PC-9 (cell line): ENCODE measurements at regions of chr15 and their contacts with region 1.

Region 1: GRCh38 chr15:50813877-50814276 is 48.4 kb upstream of the SPPL2A start:
- DNase-seq: no peak
- H3K4me3 ChIP-seq: no peak overlapping the region
- H3K27ac ChIP-seq: no peak overlapping the region
- H3K4me1 ChIP-seq: peaks cover 15% of the 10 kb centered on the region
- H3K27me3 ChIP-seq: no peaks in the 10 kb centered on the region
- CTCF ChIP-seq: no peak

Region 2: DNA sequence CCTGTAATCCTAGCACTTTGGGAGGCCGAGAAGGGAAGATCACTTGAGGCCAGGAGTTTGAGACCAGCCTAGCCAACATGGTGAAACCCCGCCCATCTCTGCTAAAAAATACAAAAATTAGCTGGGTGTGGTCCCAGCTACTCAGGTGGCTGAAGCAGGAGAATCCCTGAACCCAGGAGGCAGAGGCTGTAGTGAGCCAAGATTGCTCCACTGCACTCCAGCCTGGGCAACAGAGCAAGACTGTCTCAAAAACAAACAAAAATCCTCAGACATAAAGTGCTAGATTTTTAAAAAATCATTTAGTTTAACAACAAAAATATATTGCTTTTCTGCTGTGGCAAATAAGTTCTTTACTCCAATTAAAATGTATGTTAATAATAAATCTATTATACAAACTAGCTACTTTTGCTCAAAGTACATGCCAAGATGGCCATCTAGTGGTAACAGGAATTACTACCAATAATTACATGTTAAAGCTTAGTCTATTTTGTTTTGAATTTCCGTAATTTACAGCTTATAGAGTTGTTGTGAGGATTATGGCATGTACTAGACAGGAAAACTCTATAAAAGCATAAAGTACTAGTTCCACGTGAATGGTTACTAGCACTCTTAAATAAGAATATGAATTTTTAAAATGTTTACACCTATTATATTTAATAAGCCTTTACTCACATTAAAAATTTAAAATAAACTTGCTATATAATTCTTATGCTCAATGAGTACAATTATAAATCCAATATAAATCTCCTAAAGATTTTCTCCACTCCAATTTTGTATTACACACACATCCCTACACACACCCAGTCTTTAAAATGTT is 497.9 kb before region 1 on chr15:
- CTCF ChIA-PET with region 1: no interaction called
- POLR2A ChIA-PET with region 1: no interaction called
- intact Hi-C with region 1: no loop called
- DNase-seq: peak in 1 of 2 experiments; percentile 52
- H3K4me3 ChIP-seq: no peak overlapping the region
- H3K27ac ChIP-seq: no peak overlapping the region
- H3K4me1 ChIP-seq: 0 out of 2 replicates have a peak, but pooled peaks cover 9% of the 10 kb centered on the region
- H3K27me3 ChIP-seq: no peaks in the 10 kb centered on the region
- CTCF ChIP-seq: peak; percentile 82

Region 3: DNA sequence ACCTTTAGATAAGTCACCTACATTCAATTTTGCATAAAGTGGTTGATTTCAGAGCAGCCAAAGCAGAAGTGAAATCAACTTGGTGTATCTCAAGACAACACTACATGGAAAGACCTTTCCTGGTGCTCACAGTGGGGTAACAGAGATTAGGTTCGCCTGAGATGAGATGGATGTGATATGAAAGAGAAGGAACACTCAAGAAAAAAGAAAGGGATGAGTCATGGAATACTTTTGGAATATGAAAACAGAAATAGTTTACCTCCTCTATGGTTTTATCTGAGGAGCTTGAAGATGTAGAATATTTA is 41.2 kb after region 1 on chr15:
- CTCF ChIA-PET with region 1: no interaction called
- POLR2A ChIA-PET with region 1: no interaction called
- intact Hi-C with region 1: loop called (anchors 1 kb)
- DNase-seq: peak in 1 of 2 experiments; percentile 35
- H3K4me3 ChIP-seq: no peak overlapping the region
- H3K27ac ChIP-seq: peak overlapping the region; percentile 50
- H3K4me1 ChIP-seq: peaks cover 36% of the 10 kb centered on the region
- H3K27me3 ChIP-seq: no peaks in the 10 kb centered on the region
- CTCF ChIP-seq: no peak